ENCODE measurements at regions of chr16 and their contacts with region 1.

Region 1: GRCh38 chr16:84617791-84618580 is at the start of gene COTL1:
- DNase-seq: peak; percentile 86 to 96 (median 90)
- ATAC-seq: peak; percentile 94
- H3K4me3 ChIP-seq: peak within 1 kb of the TSS; percentile 70
- H3K4me3 Mint-ChIP-seq: peak within 1 kb of the TSS; percentile 95 to 99 (median 97)
- H3K27ac ChIP-seq: peak within 1 kb of the TSS; percentile 68
- H3K27ac Mint-ChIP-seq: peak within 1 kb of the TSS; percentile 82 to 95 (median 91)
- H3K4me1 ChIP-seq: peaks cover 32 to 39% of the 10 kb centered on the region in 2 donors
- H3K4me1 Mint-ChIP-seq: peaks cover 33 to 64% (median 53%) of the 10 kb centered on the region in 7 donors
- H3K27me3 ChIP-seq: no peaks in the 10 kb centered on the region
- H3K27me3 Mint-ChIP-seq: peaks cover 0 to 14% (median 0%) of the 10 kb centered on the region in 5 donors
- total RNA-seq, gene COTL1: 84.2 to 704 (median 172) TPM

Region 2: DNA sequence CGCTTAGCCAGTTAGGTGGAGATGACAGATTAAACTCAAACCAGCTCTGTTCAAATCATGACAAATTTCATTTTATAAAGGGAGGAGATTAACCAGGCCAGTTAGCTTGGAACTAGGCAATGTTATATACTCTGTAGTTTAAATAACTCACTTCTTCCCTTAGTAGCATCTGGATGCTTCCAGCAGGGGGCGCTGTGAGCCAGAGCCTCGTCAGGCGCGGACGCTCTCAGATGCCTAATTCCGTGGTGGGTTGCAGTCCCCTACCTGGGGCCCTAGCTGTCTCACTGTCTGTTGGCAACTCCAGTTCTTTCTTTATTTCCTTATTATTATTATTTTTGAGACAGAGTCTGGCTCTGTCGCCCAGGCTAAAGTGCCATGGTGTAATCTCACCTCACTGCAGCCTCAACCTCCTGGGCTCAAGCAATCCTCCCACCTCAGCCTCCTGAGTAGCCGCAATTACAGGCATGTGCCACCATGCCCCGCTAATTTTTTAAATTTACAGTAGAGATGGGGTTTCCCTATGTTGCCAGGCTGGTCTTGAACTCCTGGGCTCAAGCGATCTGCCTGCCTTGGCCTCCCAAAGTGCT is 340.7 kb before region 1 on chr16:
- CTCF ChIA-PET with region 1: interaction called, 3 read pairs
- POLR2A ChIA-PET with region 1: no interaction called
- intact Hi-C with region 1: loop called in 1 of 2 experiments (anchors 2 kb)
- DNase-seq: peak; percentile 27 to 73 (median 58)
- ATAC-seq: peak; percentile 78
- H3K4me3 ChIP-seq: no peak overlapping the region
- H3K4me3 Mint-ChIP-seq: no peak overlapping the region
- H3K27ac ChIP-seq: no peak overlapping the region
- H3K27ac Mint-ChIP-seq: no peak overlapping the region
- H3K4me1 ChIP-seq: no peaks in the 10 kb centered on the region
- H3K4me1 Mint-ChIP-seq: no peaks in the 10 kb centered on the region
- H3K27me3 ChIP-seq: no peaks in the 10 kb centered on the region
- H3K27me3 Mint-ChIP-seq: peaks cover 0 to 10% (median 0%) of the 10 kb centered on the region in 5 donors

Region 3: DNA sequence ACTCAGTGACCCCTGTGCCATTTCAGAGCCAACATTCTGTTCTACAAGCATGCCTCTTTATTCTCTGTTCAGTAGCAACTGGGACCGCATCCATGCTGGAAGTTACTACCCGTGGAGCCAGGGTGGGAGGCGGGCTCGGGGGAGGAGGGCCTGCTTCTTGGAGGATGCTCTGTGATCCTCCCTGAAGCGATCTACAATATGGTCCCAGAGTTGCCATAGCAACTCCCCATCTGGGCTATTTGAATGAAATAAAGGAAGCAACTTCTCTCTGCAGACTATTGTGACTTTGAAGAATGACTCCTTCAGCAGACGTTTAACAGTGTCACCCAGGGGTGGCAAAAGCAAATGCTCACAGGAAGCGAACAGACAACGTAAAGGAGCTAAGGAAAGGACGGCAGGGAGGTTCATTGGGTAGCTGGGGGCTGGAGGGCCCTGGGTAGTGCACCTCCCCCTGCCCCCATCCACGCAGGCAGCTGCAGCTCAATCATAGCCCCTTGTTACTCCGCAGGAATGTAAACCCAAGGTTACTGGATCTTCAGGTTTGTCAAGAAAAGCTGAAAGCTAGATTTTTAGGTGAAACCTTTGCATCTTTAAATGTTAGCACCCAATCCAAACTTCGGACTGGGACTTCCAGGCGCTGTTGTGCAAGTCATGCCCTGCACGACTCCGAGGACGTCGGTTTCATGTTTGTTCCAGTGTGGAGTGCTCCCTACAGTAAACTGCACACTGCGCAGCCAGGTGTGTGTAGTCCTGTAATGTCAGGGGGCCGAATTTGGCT is 62.4 kb before region 1 on chr16:
- CTCF ChIA-PET with region 1: interaction called, 9 read pairs
- POLR2A ChIA-PET with region 1: interaction called, 28 read pairs
- intact Hi-C with region 1: loop called in 1 of 2 experiments (anchors 2 kb)
- DNase-seq: peak in 5 of 9 donors; percentile 11 to 42 (median 34)
- ATAC-seq: no peak
- H3K4me3 ChIP-seq: no peak overlapping the region
- H3K4me3 Mint-ChIP-seq: peak overlapping the region in 6 of 10 donors; percentile 4 to 59 (median 32)
- H3K27ac ChIP-seq: peak overlapping the region; percentile 17
- H3K27ac Mint-ChIP-seq: peak overlapping the region in 8 of 9 donors; percentile 28 to 76 (median 66)
- H3K4me1 ChIP-seq: peaks cover 32 to 37% of the 10 kb centered on the region in 2 donors
- H3K4me1 Mint-ChIP-seq: peaks cover 13 to 52% (median 42%) of the 10 kb centered on the region in 7 donors
- H3K27me3 ChIP-seq: no peaks in the 10 kb centered on the region
- H3K27me3 Mint-ChIP-seq: no peaks in the 10 kb centered on the region

Region 4: DNA sequence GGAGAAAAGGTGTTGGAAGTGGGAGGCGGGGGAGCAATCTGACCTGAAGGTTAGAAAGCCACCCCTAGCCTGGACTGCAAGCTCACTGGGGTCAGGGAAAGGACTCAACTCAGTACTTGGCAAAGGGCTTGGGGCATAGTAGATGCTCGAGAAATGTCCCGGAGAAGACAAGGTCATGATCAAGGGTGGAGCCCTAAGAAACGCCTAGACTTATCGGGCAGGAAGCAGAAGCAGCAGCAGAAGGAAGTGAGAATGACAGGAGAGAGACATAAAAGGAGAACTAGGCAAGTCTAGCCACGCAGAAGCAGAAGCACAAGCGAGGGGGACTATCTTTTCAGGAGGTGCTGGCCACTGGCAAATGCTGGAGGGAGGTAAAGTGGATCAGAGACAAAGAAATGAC is 10.3 kb before region 1 on chr16:
- CTCF ChIA-PET with region 1: interaction called, 5 read pairs
- POLR2A ChIA-PET with region 1: interaction called, 79 read pairs
- intact Hi-C with region 1: loop called (anchors 1 kb)
- DNase-seq: peak in 2 of 9 donors; percentile 46 to 47
- ATAC-seq: peak; percentile 73
- H3K4me3 ChIP-seq: peak overlapping the region; percentile 36
- H3K4me3 Mint-ChIP-seq: peak overlapping the region; percentile 66 to 89 (median 74)
- H3K27ac ChIP-seq: peak overlapping the region; percentile 38
- H3K27ac Mint-ChIP-seq: peak overlapping the region; percentile 76 to 96 (median 94)
- H3K4me1 ChIP-seq: peaks cover 88 to 94% of the 10 kb centered on the region in 2 donors
- H3K4me1 Mint-ChIP-seq: peaks cover 67 to 94% (median 93%) of the 10 kb centered on the region in 7 donors
- H3K27me3 ChIP-seq: no peaks in the 10 kb centered on the region
- H3K27me3 Mint-ChIP-seq: no peaks in the 10 kb centered on the region

Region 5: DNA sequence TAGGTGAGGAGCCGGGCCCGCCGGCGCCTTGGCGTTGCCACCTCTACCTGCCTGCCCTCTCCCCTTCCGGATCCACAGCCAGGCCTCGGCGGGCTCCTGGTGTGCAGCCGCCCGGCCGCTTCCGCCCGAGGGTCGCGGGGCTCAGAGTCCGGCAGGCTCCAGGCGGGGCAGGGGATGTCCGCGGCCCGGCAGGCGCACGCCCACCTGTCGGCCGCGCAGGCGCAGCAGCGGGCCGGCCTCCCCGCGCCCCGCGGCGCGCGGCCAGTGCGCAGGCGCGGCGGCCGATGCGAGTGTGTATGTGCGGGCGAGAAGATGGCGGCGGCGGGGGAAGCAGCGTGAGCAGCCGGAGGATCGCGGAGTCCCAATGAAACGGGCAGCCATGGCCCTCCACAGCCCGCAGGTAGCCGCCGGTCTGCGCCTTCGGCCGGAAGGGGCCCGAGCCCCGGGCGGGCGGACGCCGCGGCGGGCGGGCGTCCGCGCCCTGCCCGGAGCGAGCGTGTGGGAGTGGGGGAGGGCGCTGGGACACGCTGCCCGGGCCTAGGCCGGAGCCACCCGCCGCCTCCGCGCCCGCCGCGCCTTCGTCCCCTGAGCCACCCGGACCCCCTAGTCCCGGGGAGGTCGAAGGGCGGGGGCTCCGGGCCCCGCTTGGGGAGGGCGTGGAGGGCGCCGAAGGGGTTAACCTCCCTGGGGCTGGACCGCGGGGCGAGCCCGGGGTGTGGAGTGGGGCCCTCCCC is 81.9 kb after region 1 on chr16 and contains the start of gene USP10:
- CTCF ChIA-PET with region 1: interaction called, 4 read pairs
- POLR2A ChIA-PET with region 1: interaction called, 3 read pairs
- intact Hi-C with region 1: loop called (anchors 2 kb)
- DNase-seq: peak; percentile 75 to 93 (median 88)
- ATAC-seq: peak; percentile 91
- H3K4me3 ChIP-seq: peak within 1 kb of the TSS; percentile 61
- H3K4me3 Mint-ChIP-seq: peak within 1 kb of the TSS; percentile 92 to 99 (median 98)
- H3K27ac ChIP-seq: peak within 1 kb of the TSS; percentile 87
- H3K27ac Mint-ChIP-seq: peak within 1 kb of the TSS; percentile 92 to 99 (median 96)
- H3K4me1 ChIP-seq: peaks cover 11 to 22% of the 10 kb centered on the region in 2 donors
- H3K4me1 Mint-ChIP-seq: peaks cover 19 to 46% (median 42%) of the 10 kb centered on the region in 7 donors
- H3K27me3 ChIP-seq: no peaks in the 10 kb centered on the region
- H3K27me3 Mint-ChIP-seq: peaks cover 0 to 4% (median 0%) of the 10 kb centered on the region in 5 donors
- total RNA-seq, gene USP10: 88.4 to 113 (median 112) TPM

Region 6: GRCh38 chr16:84952335-84953189 is 334.6 kb after region 1 on chr16:
- CTCF ChIA-PET with region 1: no interaction called
- POLR2A ChIA-PET with region 1: no interaction called
- intact Hi-C with region 1: loop called (anchors 2 to 5 kb)
- DNase-seq: peak; percentile 28 to 80 (median 68)
- ATAC-seq: peak; percentile 94
- H3K4me3 ChIP-seq: no peak overlapping the region
- H3K4me3 Mint-ChIP-seq: no peak overlapping the region
- H3K27ac ChIP-seq: no peak overlapping the region
- H3K27ac Mint-ChIP-seq: peak overlapping the region in 1 of 9 donors; percentile 9
- H3K4me1 ChIP-seq: peaks cover 0 to 3% of the 10 kb centered on the region in 2 donors
- H3K4me1 Mint-ChIP-seq: peaks cover 0 to 12% (median 4%) of the 10 kb centered on the region in 7 donors
- H3K27me3 ChIP-seq: no peaks in the 10 kb centered on the region
- H3K27me3 Mint-ChIP-seq: peaks cover 0 to 4% (median 0%) of the 10 kb centered on the region in 5 donors